ENCODE measurements at regions of chr6 and their contacts with region 1.

Region 1: GRCh38 chr6:42453031-42453653 is 1.4 kb upstream of the TRERF1 start:
- DNase-seq: peak; percentile 78
- H3K4me3 ChIP-seq: peak overlapping the region; percentile 88
- H3K27ac ChIP-seq: peak overlapping the region; percentile 86
- H3K27me3 ChIP-seq: no peaks in the 10 kb centered on the region
- CTCF ChIP-seq: no peak

Region 2: DNA sequence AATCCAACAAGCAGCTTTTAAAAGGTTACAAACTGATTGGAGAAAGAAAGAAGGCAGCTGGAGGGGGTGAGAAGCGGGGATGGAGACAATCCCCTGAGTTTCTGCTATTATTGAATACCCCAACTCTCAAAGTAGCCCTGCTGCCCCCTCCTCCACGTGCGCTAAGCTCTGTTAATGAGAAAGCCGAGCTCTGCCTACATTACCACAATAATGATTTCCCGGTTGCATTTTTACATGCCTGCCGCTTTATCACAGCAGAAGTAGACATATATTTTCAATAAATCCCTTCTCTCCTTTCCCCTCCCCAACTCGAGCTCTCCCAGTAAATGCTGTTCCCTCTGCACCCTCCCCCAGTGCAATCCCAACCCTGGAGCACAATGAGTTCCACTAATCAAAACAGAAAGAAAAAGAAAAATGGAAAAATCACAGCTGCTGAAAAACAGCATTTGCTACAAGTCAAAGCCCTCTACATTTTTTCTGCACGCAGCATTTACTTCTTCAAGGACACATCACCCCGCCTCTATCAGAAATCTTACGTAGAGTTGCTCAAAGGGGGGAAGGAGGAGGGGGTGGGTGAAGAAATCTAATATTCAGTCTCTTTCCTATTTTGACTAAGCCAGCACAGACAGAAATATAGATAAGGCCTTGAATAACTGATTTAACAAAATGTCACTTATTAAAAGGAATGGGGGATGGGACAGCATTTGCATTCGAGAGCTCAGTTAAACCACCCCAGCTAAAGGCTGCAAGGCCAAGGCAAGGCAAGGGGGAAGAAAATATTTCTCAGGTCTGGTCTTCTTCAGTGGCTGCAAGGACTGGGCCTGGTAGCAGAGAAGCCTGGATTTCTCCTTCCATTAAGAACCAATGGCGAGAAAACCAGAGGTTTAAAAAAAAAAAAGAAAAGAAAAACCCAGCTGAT is 12.1 kb before region 1 on chr6:
- CTCF ChIA-PET with region 1: no interaction called
- POLR2A ChIA-PET with region 1: interaction called, 19 read pairs
- DNase-seq: peak; percentile 57
- H3K4me3 ChIP-seq: peak overlapping the region; percentile 27
- H3K27ac ChIP-seq: peak overlapping the region; percentile 63
- H3K27me3 ChIP-seq: no peaks in the 10 kb centered on the region
- CTCF ChIP-seq: no peak

Region 3: GRCh38 chr6:42471142-42471541 is 18.0 kb after region 1 on chr6:
- CTCF ChIA-PET with region 1: interaction called, 10 read pairs
- POLR2A ChIA-PET with region 1: no interaction called
- DNase-seq: no peak
- H3K4me3 ChIP-seq: no peak overlapping the region
- H3K27ac ChIP-seq: no peak overlapping the region
- H3K27me3 ChIP-seq: no peaks in the 10 kb centered on the region
- CTCF ChIP-seq: no peak

Region 4: DNA sequence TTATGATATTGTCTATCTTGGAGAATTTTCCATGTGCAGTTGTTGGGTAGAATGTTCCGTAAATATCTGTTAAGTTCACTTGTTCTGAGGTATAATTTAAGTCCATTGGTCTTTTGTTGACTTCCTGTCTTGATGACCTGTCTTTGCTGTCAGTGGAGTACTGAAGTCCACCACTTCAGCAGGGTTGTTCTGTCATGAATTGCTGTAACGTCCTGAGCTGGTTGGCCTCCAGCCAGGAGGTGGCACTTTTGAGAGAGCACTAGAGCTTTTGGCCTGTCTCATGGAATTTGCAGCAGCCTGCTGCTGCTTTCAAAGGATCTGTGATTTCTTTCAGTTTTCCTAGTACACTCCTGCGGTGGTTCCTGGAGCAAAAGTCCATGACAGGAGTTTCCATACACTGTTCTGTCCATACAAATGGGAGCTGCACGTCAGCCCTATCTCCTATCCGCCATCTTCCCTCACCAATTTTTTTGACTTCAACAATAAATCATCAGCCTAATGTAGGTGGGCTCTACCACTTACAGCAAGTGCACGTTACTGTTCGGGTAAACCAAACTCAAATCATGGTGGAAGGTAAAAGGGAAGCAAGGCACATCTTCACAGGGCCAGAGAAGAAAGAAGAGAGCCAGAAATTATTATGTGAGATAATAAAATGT is 45.5 kb after region 1 on chr6:
- CTCF ChIA-PET with region 1: no interaction called
- POLR2A ChIA-PET with region 1: no interaction called
- DNase-seq: no peak
- H3K4me3 ChIP-seq: no peak overlapping the region
- H3K27ac ChIP-seq: no peak overlapping the region
- H3K27me3 ChIP-seq: no peaks in the 10 kb centered on the region
- CTCF ChIP-seq: no peak

Region 5: DNA sequence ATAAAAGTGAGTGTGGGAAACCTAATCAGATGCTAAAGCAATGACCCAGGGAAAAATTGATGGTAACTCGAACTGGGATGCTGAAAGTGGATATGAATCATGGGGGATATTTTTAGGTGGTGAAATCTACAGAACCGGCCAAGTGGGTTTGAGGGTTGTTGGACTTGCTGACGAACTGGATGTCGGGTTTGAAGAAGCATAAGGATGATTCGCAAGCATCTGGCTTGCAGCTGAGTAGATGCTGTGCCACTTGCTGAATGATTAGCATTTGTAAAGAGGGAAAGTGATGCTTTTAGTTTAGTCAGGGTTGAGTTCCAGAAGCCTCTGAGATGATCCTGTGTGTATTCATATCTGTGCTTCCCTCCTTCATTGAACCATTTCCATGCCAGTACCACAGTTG is 165.5 kb after region 1 on chr6:
- CTCF ChIA-PET with region 1: no interaction called
- POLR2A ChIA-PET with region 1: no interaction called
- DNase-seq: peak; percentile 16
- H3K4me3 ChIP-seq: no peak overlapping the region
- H3K27ac ChIP-seq: no peak overlapping the region
- H3K27me3 ChIP-seq: no peaks in the 10 kb centered on the region
- CTCF ChIP-seq: no peak